Lower leg skin (tissue), 4 donors: ENCODE measurements at regions of chr6 and their contacts with region 1.

Region 1: DNA sequence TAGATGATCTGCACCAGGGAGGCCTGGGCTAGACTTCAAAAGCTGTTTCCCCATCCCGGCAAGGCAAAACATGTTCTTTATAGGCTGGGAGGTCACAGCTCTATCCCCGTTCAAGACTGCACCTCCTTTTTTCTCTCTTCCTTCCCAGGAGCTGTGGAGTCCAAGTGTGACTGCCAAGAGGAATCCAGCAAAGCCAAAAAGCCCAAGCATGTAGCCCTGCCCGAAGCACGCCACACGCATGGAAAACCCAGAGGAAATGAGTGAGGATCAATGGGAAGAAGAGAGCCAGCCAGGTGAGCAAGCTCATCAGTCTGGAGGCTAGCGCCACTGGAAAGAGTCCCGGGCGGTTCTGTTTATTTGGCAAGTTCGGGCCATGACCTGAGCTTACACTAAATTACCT is 240.4 kb downstream of the PRL start:
- DNase-seq: peak; percentile 49 to 84
- H3K4me3 ChIP-seq: no peak overlapping the region
- CTCF ChIP-seq: no peak
- POLR2A ChIP-seq: no peak

Region 2: DNA sequence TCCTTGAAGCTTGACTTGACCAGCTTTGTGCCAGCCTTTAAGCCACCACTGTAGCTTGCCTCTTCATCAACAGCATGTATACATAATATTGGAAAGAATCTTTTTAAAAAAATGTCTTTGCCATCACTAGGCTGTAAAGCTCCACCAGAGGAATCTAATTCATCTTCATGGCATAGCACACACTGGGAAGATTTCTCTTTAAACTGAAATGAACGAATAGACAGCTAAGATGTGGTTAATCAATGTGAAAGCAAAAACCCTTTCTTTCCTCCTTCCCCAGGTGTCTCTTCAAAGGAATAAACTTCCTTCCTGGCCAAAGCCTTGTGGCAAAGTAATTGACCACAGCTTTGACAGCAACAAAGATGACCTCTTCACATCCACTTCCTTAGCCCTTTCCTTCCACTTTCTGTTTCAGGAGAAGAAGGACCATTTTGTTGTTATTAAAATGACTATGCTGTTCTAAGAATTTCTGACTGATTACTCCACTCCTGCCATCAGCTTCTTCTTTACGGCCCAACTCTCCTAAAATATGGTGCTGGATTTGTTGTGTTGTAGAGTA is 891.6 kb before region 1 on chr6:
- intact Hi-C with region 1: loop called (anchors 5 kb)
- DNase-seq: no peak
- H3K4me3 ChIP-seq: no peak overlapping the region
- CTCF ChIP-seq: no peak
- POLR2A ChIP-seq: no peak

Region 3: DNA sequence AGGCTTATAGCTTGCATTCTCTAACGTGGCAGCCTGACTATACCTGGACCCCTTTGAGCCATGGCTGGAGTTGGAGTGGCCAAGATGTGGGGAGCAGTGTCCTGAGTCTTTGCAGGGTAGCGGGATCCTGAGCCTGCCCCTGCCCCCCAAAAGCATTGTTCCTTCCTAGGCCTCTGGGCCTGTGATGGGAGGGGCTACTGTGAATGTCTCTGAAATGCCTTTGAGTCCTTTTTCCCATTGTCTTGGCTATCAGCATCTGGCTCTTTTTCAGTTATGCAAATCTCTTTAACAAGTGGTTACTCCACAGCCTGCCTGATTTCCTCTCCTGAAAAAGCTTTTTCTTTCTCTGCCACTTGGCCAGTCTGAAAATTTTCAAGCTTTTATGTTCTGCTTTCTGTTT is 257.4 kb after region 1 on chr6:
- intact Hi-C with region 1: no loop called
- DNase-seq: no peak
- H3K4me3 ChIP-seq: no peak overlapping the region
- CTCF ChIP-seq: no peak
- POLR2A ChIP-seq: no peak